ENCODE measurements at regions of chr10 and their contacts with region 1.

Region 1: DNA sequence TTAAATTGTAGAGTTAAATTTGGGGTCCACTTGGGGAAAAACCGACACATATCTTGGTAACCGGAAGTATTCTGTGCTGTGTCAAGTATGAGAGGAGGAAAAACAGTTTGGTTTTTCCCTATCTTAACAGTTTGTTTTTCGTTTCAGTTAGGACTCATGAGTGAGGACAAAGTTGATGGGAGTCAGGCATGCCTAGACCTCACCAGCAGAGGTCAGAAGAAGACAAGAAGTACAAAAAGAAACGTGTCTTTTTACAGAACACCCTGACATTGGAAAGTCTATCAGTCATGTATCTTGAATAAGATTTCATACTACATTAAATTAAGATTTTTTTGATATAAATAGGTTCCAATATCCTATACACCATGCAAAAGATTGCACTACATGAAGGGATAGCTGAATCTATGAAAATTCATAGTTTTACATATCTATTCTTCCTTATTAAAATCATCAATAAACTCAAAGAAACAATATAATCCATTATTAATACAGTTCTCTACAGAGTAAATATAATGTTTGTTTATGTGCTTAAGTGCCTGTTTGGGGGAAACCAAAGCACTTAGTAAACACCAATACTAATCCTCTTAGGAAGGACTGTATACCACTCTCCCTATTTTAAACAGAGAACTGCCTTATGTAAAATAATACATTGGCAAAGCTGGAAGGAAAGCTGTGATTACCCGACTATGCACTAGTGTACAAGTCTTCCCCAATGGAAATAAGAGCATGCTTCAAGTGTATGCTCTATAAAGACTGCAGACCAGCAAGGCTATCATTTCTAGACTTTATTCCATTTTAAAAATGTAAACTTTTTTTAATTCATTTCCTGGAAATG is 95.6 kb downstream of the USP6NL start:
- DNase-seq: no peak
- ATAC-seq: peak; percentile 90

Region 2: DNA sequence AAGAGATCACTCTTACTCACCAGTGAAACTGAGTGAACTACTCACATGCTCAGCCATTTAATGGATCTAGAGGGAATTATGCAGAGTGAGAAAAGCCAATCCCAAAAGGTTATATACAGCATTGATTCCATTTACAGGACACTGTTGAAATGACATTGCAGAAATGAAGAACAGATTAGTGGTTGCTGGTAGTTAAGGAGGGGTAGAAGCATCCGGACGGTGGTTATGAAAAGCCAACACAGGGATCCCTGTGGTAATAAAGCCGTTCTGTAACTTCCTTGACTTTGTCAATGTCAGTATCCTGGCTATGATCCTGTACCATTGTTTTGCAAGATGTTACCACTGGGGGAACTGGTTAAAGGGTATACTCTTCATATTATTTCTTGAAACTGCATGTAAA is 157.8 kb before region 1 on chr10:
- intact Hi-C with region 1: no loop called
- DNase-seq: no peak
- ATAC-seq: no peak

Region 3: DNA sequence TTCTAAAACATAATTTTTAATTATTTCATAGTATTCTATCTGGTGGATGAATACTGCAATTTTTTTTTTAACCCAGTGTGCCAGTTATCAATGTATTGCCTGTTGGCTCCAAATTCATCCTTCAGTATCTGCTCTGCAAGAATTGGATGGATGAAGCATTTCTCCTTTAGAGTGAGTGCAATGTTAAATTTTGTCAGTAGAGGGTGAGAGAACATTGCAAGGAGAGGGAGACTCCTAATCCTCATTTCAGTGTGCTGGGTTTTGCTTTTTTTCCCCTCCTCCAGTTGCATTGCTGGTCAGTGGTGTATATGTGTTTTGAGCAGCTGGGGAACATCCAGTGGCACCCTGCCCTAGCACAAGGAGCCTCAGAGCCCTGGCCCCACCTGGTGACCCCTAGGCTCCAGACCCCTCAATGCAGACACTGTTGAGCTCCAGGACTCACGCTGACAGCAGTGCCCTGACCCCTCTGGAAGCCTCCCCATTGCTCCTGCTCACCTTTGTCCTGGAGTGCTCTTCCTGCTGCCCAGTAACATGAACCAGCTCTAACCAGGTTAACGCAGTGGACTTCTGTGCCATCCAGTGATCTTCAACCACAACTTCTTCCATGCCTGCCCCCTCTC is 103.8 kb before region 1 on chr10:
- intact Hi-C with region 1: no loop called
- DNase-seq: no peak
- ATAC-seq: no peak

Region 4: DNA sequence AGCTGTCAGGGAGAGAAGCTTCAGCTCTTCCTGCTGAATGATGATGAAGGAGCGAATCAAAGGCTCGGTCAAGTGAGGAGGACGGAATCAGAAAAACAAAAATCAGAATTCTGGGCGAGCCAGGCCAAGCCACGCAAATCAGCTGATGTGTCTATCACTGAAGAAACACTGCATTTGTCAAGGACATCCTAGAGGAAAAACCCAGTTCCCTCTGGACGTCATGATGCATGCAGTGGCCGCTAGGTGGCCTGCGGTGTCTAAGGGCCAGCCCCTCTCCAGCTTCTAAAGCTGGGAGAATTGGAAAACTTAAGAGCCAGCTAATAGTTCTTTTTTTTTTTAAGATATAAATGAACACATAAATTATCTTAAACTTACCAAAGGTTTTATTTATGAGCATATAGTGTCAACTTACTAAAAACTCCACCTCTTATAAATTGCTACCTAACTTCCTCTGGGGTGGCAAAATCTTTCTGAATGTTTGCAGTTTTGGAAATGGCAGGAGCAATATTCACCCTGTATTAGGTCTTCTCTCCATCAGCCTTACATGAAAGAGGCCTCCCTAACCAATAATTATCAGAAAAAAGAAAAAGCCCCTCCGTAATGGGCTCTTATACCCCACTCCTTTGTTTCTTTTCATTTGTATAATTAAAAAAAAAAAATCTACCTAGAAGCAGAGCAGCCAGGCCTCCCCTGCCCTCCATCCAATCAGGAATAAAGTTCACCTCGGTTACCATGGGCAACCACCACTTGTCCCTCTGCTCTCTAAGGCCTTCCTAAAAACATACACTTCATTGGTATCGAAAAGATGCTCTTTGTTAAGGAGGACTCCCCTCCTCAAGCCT is 91.1 kb before region 1 on chr10:
- intact Hi-C with region 1: no loop called
- DNase-seq: peak; percentile 57
- ATAC-seq: peak; percentile 74

Region 5: DNA sequence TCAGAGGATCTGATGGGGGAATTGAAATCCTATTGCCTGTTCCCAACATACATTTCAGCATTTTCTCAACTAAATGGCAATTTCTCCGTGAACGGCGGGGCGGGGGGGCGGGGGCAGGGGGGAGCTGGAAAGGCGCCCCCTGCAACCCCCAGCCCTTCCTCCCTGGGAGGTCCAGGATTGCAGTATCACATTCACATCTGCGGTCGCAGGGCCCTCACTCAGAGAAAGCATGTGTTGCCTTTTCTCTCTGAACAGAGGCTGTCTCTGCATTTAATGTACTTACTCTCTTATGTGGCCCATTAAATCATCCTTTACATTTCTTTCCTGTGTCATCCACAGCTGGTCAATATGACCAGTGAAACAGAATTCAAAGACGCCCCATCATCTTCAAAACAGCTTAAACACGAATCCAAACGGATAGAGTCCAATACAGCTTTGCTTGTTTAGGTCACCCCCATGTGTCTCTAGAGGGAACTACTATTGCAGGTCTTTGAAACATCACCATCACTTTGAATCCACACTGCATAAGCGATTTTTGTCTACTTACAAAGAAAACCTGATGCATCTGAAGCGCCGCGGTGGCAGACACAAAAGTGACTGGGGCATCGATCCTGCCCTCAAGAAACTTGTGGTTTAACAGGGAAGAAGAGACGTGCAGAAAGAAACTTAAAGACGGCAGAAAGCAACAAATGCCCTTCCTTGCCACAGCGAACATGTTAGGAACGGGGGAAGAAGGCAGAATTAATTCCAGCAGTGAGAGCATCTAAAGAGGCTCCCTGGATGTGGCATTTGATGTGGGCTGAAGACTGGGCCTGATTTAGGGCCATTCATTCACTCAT is 209.3 kb after region 1 on chr10:
- intact Hi-C with region 1: loop called (anchors 5 kb)
- DNase-seq: no peak
- ATAC-seq: peak; percentile 90

Region 6: DNA sequence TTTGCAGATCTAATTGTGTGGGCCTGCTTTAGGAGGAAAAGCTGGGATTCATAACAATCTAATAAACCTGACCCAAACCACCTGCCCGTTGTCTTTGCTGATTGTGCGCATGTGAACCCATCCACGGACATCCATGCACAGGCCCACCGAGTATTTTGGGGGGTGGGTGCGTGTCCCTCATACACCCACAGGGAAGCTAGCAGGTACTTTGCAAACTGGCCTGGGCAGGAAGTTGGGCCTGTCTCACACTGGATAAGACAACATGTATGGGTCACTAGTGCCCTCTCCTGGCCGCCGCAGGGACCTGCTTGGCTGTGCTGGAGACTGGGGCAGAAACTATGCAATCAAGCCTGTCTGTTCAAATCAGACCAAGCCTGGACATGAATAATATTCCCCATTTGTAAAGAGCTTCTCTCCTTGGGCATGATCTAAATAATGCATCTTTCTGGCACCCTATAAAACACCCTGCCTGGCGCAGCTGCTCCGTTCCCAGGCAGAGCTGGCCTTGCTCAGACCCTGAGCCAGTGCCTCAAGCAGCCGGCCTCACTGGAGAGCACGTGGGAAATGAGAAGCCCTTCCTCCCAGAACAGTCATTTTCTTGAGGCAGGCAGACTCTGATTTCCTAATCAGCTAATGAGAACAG is 242.1 kb after region 1 on chr10:
- intact Hi-C with region 1: loop called (anchors 10 kb)
- DNase-seq: peak; percentile 93
- ATAC-seq: peak; percentile 85

Measured in Right ventricle myocardium superior (tissue), 1 donor.